Activated B cell treated with CpG ODN at 0.5 μM for 24 hours (primary cell): ENCODE measurements at regions of chr11 and their contacts with region 1.

Region 1: GRCh38 chr11:116960930-116961329 is 123.5 kb upstream of the APOA1 start:
- DNase-seq: no peak
- ATAC-seq: no peak
- H3K4me3 Mint-ChIP-seq: no peak overlapping the region
- H3K27ac Mint-ChIP-seq: no peak overlapping the region
- H3K4me1 Mint-ChIP-seq: peaks cover 53% of the 10 kb centered on the region
- H3K27me3 Mint-ChIP-seq: no peaks in the 10 kb centered on the region
- CTCF ChIP-seq: no peak

Region 2: GRCh38 chr11:116948391-116948790 is 12.5 kb before region 1 on chr11:
- CTCF ChIA-PET with region 1: no interaction called
- POLR2A ChIA-PET with region 1: interaction called, 3 read pairs
- intact Hi-C with region 1: loop called (anchors 1 kb)
- DNase-seq: no peak
- ATAC-seq: peak; percentile 56
- H3K4me3 Mint-ChIP-seq: peak overlapping the region; percentile 52
- H3K27ac Mint-ChIP-seq: peak overlapping the region; percentile 59
- H3K4me1 Mint-ChIP-seq: peaks cover 31% of the 10 kb centered on the region
- H3K27me3 Mint-ChIP-seq: no peaks in the 10 kb centered on the region
- CTCF ChIP-seq: no peak

Region 3: DNA sequence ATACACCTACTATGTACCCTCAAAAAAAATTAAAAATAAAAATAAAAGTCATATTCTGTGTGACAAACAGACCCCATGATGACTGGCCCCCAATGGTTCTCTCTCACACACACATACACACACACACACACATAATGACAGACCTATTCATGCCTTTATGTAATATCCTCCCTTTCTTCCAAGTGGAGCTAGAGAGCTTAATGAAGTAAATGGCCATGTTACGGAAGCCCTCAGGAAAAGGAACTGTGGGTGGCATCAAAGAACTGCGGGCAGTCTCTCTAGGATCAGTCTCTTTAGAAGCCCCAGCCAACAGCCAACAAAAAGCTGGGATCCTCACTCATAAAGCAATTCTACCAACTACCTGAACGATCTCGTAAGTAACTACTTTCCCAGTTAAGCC is 11.8 kb after region 1 on chr11:
- CTCF ChIA-PET with region 1: no interaction called
- POLR2A ChIA-PET with region 1: no interaction called
- intact Hi-C with region 1: loop called (anchors 2 kb)
- DNase-seq: no peak
- ATAC-seq: no peak
- H3K4me3 Mint-ChIP-seq: no peak overlapping the region
- H3K27ac Mint-ChIP-seq: no peak overlapping the region
- H3K4me1 Mint-ChIP-seq: peaks cover 51% of the 10 kb centered on the region
- H3K27me3 Mint-ChIP-seq: no peaks in the 10 kb centered on the region
- CTCF ChIP-seq: no peak

Region 4: GRCh38 chr11:117058761-117059261 is 97.9 kb after region 1 on chr11:
- CTCF ChIA-PET with region 1: no interaction called
- POLR2A ChIA-PET with region 1: no interaction called
- intact Hi-C with region 1: no loop called
- DNase-seq: no peak
- ATAC-seq: no peak
- H3K4me3 Mint-ChIP-seq: no peak overlapping the region
- H3K27ac Mint-ChIP-seq: peak overlapping the region; percentile 9
- H3K4me1 Mint-ChIP-seq: peaks cover 76% of the 10 kb centered on the region
- H3K27me3 Mint-ChIP-seq: no peaks in the 10 kb centered on the region
- CTCF ChIP-seq: no peak

Region 5: DNA sequence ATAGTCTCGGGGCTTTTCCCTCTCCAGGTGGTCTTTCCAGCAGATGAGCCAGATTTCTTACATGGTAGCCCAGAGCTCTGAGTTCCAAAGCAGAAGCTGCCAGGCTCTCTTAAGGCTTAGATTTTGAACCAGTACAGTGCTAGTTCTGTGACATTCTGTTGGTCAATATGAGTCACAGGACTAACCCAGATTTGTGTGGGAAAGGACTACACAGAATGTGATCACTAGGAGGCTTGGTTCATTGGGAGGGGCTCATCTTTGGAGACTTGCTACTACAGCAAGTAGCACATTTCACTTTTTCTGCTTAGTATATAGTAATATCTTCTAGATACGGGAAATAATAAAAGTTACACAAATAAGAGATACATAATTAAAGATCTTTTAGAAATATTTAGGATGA is 295.6 kb after region 1 on chr11:
- CTCF ChIA-PET with region 1: no interaction called
- POLR2A ChIA-PET with region 1: no interaction called
- intact Hi-C with region 1: no loop called
- DNase-seq: no peak
- ATAC-seq: no peak
- H3K4me3 Mint-ChIP-seq: no peak overlapping the region
- H3K27ac Mint-ChIP-seq: no peak overlapping the region
- H3K4me1 Mint-ChIP-seq: no peaks in the 10 kb centered on the region
- H3K27me3 Mint-ChIP-seq: no peaks in the 10 kb centered on the region
- CTCF ChIP-seq: no peak